BJ (cell line): ENCODE measurements at regions of chr21 and their contacts with region 1.

Region 1: GRCh38 chr21:45140346-45140940 is 66.1 kb downstream of the ADARB1 start:
- DNase-seq: peak; percentile 52
- H3K4me3 ChIP-seq: no peak overlapping the region
- H3K27me3 ChIP-seq: no peaks in the 10 kb centered on the region
- CTCF ChIP-seq: peak; percentile 96

Region 2: DNA sequence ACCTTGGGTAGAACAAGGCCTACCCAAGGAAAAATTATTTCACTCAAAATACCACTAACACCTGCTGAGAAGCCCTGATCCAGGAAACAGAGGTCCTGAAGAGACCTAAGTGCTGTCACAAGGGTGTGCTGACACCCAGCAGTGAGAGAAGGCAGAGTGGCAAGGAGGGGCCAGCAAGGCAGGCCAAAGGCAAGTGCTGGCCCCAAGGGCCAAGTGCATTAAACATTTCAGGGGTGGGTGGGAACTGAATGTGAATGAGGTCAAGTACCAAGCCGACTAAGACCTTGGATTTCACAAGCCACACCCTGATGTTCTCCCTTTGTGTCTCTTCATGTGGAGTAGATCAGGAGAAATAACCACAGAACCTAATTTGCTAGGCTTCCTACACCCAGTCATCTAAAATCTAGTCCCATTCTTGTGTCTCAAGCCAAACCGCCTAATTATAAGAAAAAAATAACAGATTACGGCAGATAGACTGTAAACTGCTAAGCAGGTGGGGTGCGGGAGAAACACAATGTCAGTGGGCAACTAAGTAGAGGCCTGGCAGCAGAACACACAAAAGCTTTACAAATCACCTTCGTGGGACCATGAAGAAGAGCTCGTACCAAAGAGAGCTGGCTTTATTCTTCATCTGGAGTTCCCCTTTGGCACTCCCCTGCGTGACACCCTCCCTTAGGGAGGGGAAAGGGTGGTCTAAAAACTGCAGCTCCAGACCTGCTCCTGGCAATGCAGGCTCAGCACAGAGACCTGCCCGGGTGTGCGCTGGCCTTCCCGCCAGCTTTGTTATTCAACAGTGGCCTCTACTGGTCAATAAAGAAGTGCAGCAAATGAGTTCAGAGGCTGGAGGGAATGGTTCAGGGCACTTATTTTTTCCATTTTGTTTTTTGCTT is 347.5 kb before region 1 on chr21:
- CTCF ChIA-PET with region 1: interaction called, 11 read pairs
- POLR2A ChIA-PET with region 1: no interaction called
- DNase-seq: no peak
- H3K4me3 ChIP-seq: no peak overlapping the region
- H3K27me3 ChIP-seq: no peaks in the 10 kb centered on the region
- CTCF ChIP-seq: peak; percentile 75

Region 3: DNA sequence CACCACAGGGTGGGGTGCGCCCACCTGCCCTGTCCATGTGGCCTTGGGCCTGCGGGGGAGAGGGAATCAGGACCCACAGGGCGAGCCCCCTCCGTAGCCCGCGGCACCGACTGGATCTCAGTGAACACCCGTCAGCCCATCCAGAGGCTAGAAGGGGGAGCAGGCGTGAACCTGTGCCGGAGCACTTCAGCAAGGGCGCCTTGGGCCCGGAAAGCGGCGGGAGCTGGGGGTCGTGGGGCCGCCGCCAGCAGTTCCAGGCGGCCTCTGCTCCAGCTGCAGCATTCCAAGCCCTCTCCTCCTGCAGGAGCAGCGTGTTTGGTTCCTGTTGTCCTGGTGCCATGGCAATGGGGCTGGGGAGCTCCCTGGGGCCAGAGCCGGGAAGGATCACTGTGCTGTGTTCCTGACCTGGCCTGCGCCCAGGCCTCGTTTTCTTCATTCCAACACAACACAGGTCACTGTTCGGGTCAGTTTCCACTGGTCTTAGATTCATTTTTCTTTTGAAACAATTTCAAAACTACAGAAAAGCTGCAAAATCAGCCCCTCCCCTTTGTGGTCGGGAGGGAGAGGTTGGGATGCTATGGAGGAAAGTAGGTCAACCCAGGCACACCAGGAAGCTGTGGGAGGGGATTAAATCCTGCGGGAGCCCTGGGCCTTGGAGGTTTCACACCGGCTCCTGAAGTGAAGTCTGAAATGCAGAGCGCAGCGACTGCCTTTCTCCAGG is 181.8 kb before region 1 on chr21:
- CTCF ChIA-PET with region 1: interaction called, 237 read pairs
- POLR2A ChIA-PET with region 1: no interaction called
- DNase-seq: no peak
- H3K4me3 ChIP-seq: no peak overlapping the region
- H3K27me3 ChIP-seq: no peaks in the 10 kb centered on the region
- CTCF ChIP-seq: no peak

Region 4: GRCh38 chr21:45108808-45109781 is 31.3 kb before region 1 on chr21:
- CTCF ChIA-PET with region 1: interaction called, 23 read pairs
- POLR2A ChIA-PET with region 1: no interaction called
- DNase-seq: no peak
- H3K4me3 ChIP-seq: no peak overlapping the region
- H3K27me3 ChIP-seq: no peaks in the 10 kb centered on the region
- CTCF ChIP-seq: no peak

Region 5: GRCh38 chr21:45228171-45228641 is 87.8 kb after region 1 on chr21:
- CTCF ChIA-PET with region 1: interaction called, 15 read pairs
- POLR2A ChIA-PET with region 1: no interaction called
- DNase-seq: peak; percentile 96
- H3K4me3 ChIP-seq: no peak overlapping the region
- H3K27me3 ChIP-seq: peaks cover 10% of the 10 kb centered on the region
- CTCF ChIP-seq: no peak

Region 6: GRCh38 chr21:45287438-45288391 is 147.3 kb after region 1 on chr21 and contains the start of gene POFUT2:
- CTCF ChIA-PET with region 1: interaction called, 138 read pairs
- POLR2A ChIA-PET with region 1: no interaction called
- DNase-seq: no peak
- H3K4me3 ChIP-seq: peak within 1 kb of the TSS; percentile 95
- H3K27me3 ChIP-seq: no peaks in the 10 kb centered on the region
- CTCF ChIP-seq: no peak
- polyA plus RNA-seq, gene POFUT2: 27.0 and 38.5 TPM in 2 replicates

Region 7: DNA sequence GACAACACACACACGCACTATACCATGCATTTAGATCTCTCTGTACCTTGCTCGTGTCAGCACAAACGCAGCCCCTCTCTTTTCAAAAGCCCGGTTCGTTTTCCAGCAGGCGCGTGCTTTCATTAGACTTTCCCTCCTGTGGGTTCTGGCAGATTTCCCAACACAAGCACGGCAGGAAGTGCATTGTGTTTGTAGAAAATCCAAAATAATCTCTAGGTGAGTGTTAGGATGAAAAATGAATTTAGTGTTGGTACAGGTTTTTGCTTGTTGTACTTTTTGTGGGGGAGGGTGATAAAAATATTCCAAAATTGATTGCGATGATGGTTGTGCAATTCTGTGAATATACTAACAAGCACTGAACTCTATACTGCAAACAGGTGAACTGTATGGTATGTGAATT is 201.3 kb after region 1 on chr21:
- CTCF ChIA-PET with region 1: no interaction called
- POLR2A ChIA-PET with region 1: no interaction called
- DNase-seq: no peak
- H3K4me3 ChIP-seq: no peak overlapping the region
- H3K27me3 ChIP-seq: peaks cover 2% of the 10 kb centered on the region; the same call in 1 of the 2 replicates
- CTCF ChIP-seq: no peak